ENCODE measurements at regions of chr15 and their contacts with region 1.

Region 1: DNA sequence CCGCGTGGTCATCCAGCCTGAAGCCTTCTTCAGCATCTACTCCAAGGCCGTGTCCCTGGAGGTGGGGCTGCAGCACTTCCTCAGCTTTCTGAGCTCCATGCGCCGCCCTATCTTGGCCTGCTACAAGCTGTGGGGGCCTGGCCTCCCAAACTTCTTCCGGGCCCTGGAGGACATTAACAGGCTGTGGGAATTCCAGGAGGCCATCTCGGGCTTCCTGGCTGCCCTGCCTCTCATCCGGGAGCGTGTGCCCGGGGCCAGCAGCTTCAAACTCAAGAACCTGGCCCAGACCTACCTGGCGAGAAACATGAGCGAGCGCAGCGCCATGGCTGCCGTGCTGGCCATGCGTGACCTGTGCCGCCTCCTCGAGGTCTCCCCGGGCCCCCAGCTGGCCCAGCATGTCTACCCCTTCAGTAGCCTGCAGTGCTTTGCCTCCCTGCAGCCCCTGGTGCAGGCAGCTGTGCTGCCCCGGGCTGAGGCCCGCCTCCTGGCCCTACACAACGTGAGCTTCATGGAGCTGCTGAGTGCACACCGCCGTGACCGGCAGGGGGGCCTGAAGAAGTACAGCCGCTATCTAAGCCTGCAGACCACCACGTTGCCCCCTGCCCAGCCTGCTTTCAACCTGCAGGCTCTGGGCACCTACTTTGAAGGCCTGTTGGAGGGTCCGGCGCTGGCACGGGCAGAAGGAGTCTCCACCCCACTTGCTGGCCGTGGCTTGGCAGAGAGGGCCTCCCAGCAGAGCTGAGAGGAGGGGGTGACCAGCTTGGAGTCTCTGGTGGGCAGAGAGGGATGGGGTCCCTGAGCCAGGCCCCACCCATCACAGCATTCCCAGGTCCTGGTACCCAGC is 37.9 kb downstream of the GOLGA6A start:
- H3K4me3 Mint-ChIP-seq: no peak overlapping the region
- H3K27ac Mint-ChIP-seq: no peak overlapping the region
- H3K4me1 Mint-ChIP-seq: peaks cover 7% of the 10 kb centered on the region
- H3K27me3 Mint-ChIP-seq: no peaks in the 10 kb centered on the region

Region 2: GRCh38 chr15:73972984-73973682 is 71.4 kb before region 1 on chr15:
- intact Hi-C with region 1: loop called (anchors 5 kb)
- H3K4me3 Mint-ChIP-seq: peak overlapping the region; percentile 52
- H3K27ac Mint-ChIP-seq: no peak overlapping the region
- H3K4me1 Mint-ChIP-seq: peaks cover 23% of the 10 kb centered on the region
- H3K27me3 Mint-ChIP-seq: peaks cover 17% of the 10 kb centered on the region

Measured in dendritic cell treated with granulocyte-macrophage colony-stimulating factor and Interleukin-4, amounts not matched to agents 40 ng/mL and 50 ng/mL, for 4 days (primary cell).